ENCODE measurements at regions of chr4 and their contacts with region 1.

Region 1: DNA sequence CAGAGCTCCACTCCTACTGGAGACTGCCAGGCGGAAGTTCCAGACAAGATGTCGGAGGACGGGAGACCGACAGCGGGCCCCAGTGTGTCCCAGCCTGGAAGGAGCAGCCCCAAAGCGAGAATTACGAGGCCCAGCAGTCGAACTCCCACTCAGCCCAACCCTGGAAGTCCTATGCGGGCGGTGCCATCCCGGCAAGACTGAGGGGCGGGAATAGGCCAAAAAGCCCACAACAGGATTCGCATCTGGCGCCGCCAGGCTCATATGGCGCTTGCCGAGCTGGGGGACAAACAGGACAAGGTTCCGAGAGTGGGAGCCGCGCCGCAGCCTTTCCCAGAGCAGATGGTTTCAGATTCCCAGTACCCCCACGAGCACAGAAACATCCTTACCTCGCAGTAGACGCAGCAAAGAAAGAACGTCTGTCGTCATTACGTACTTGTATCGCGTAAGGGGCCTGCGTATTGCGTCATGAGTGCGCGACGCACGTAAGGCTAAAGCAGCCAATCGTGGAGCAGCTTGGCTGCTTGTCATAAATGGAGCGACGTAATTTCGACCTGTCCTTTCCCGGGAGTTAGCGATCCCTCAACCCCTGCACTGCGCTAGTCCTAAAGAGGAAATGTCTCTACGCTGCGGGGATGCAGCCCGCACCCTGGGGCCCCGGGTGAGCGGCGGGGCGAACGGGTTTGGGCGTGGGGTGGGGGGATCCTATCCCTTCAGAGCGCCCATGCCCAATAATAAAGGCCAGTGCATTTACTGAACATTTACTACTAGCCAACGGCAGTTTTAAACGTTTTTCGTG is at the starts of genes LIAS and RPL9:
- DNase-seq: peak; percentile 83 to 99 (median 94)
- ATAC-seq: peak; percentile 81
- H3K4me3 ChIP-seq: peak within 1 kb of the TSS; percentile 87 to 90
- H3K4me3 Mint-ChIP-seq: peak within 1 kb of the TSS; percentile 98
- H3K27ac ChIP-seq: peak within 1 kb of the TSS; percentile 91 to 97
- H3K27ac Mint-ChIP-seq: peak within 1 kb of the TSS; percentile 100
- H3K4me1 ChIP-seq: peaks cover 25% of the 10 kb centered on the region
- H3K4me1 Mint-ChIP-seq: peaks cover 42% of the 10 kb centered on the region
- H3K27me3 ChIP-seq: no peaks in the 10 kb centered on the region
- H3K27me3 Mint-ChIP-seq: no peaks in the 10 kb centered on the region
- CTCF ChIP-seq: no peak
- total RNA-seq, gene LIAS: 9.5 to 11.0 TPM
- total RNA-seq, gene RPL9: 2,977 to 3,433 TPM

Region 2: DNA sequence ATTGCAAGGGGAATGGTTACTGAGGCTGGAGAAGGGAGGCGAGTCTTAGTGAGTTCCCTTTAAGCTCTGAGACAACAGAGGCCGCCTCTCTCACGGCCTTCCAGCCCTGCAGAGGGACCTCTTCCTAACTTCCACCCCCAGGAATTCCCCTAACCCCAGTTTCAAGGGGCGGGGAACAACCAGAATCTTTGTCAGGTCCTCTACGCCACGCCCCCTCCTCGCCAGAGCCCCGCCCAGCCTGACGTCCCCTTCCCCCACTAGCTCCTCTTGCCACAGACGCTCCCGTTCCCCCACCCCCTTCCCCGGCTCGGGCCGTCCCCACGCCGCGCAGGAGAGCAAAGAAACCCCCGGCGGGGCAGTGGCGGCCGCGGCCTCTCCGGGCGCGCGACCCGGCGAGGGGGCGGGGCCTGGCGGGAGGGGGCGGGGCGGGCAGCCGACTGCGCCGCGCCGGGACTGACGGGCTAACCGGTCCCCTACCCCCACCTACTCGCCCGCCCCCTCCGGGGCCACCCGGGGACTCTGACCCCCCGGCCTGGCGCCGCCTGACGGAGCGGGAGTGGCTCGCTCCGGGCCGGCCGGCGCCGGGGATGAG is 414.2 kb before region 1 on chr4:
- CTCF ChIA-PET with region 1: no interaction called
- POLR2A ChIA-PET with region 1: no interaction called
- intact Hi-C with region 1: loop called (anchors 5 to 10 kb)
- DNase-seq: peak; percentile 85 to 99 (median 93)
- ATAC-seq: peak; percentile 83
- H3K4me3 ChIP-seq: peak overlapping the region; percentile 60 to 66
- H3K4me3 Mint-ChIP-seq: peak overlapping the region; percentile 92
- H3K27ac ChIP-seq: peak overlapping the region; percentile 59 to 89
- H3K27ac Mint-ChIP-seq: peak overlapping the region; percentile 96
- H3K4me1 ChIP-seq: peaks cover 21% of the 10 kb centered on the region
- H3K4me1 Mint-ChIP-seq: peaks cover 53% of the 10 kb centered on the region
- H3K27me3 ChIP-seq: no peaks in the 10 kb centered on the region
- H3K27me3 Mint-ChIP-seq: no peaks in the 10 kb centered on the region
- CTCF ChIP-seq: no peak

Region 3: DNA sequence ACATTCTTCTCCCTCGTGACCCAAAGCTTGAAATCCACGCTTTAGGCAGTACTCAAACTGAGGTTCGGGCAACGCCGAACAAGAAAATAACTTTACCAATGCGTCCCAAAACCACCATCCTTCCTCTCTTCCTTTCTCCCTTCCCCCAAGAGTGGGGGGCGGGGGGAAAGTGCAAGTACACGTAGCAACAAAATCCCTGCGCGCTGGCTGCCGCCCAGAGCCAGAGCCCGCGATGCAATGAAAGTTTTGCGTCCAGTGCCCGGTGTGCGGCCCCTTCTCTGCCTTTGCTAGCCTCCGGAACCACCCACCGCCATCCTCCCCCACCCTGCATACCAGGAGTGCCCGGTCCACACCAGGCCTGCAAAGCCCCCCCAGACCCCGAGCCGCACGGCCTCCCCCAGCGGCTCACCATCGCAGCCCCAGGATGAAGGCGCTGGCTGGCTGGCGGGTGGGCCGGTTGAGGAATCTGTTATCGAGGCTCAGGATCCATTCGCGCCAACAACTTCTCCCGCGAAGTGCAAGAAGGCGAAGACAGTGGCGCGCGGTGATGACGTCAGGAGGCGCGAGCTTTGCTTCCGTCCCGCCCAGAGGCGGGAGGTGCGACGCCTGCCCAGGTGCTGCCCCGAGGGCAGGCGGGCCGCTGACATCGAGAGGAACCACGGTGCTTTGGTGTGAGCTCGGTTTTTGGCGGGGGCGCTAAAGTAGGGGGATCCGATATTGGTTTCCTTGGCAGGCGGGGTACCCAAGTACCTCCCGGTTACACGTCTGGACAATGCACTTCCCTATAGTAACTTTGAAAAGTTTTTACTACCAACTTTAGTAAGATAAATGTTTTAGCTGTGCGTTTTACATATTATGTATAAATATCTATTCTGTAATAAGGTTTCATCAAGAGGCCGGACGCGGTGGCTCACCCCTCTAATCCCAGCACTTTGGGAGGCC is 92.6 kb before region 1 on chr4 and contains the start of gene RFC1:
- CTCF ChIA-PET with region 1: no interaction called
- POLR2A ChIA-PET with region 1: interaction called, 5 read pairs
- intact Hi-C with region 1: loop called (anchors 1 kb)
- DNase-seq: peak; percentile 86 to 96 (median 95)
- ATAC-seq: peak; percentile 97
- H3K4me3 ChIP-seq: peak within 1 kb of the TSS; percentile 92 to 99
- H3K4me3 Mint-ChIP-seq: peak within 1 kb of the TSS; percentile 93
- H3K27ac ChIP-seq: peak within 1 kb of the TSS; percentile 81
- H3K27ac Mint-ChIP-seq: peak within 1 kb of the TSS; percentile 94
- H3K4me1 ChIP-seq: peaks cover 18% of the 10 kb centered on the region
- H3K4me1 Mint-ChIP-seq: peaks cover 35% of the 10 kb centered on the region
- H3K27me3 ChIP-seq: no peaks in the 10 kb centered on the region
- H3K27me3 Mint-ChIP-seq: no peaks in the 10 kb centered on the region
- CTCF ChIP-seq: no peak
- total RNA-seq, gene RFC1: 82.2 to 89.8 TPM

Region 4: DNA sequence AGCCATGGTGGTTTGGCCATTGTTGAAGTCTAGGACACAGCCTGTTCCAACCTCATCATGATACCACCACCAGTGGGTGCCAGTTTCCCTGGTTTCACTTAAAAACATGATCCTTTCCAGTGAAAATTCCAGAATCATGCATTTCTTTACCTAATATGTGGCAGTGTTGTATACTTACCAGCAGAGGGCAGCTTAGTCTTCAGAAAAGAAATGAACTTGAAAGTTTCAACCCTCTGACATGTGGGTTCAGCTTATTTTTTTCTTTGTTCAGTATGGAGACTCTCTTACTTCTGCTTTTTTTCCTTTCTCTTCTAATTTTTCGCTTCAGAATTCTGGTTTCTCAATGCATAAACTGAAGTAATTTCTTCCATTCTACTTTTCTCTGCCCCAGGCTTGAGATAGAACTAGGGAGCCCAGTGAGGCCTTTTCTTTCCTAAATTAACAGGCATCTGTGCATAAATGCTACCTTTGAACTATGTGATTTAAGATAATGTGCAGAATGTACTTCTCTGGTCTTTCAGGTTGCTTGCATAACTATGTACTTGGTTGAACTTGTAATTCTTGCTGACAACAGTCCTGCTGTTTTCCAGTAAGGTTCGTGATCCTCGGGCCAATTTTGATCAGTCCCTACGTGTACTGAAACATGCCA is 10.8 kb after region 1 on chr4:
- CTCF ChIA-PET with region 1: interaction called, 5 read pairs
- POLR2A ChIA-PET with region 1: interaction called, 10 read pairs
- intact Hi-C with region 1: no loop called
- DNase-seq: peak in 2 of 9 experiments; percentile 55 to 72
- ATAC-seq: peak; percentile 93
- H3K4me3 ChIP-seq: no peak overlapping the region
- H3K4me3 Mint-ChIP-seq: no peak overlapping the region
- H3K27ac ChIP-seq: no peak overlapping the region
- H3K27ac Mint-ChIP-seq: no peak overlapping the region
- H3K4me1 ChIP-seq: no peaks in the 10 kb centered on the region
- H3K4me1 Mint-ChIP-seq: peaks cover 4% of the 10 kb centered on the region
- H3K27me3 ChIP-seq: no peaks in the 10 kb centered on the region
- H3K27me3 Mint-ChIP-seq: no peaks in the 10 kb centered on the region
- CTCF ChIP-seq: peak; percentile 82

Region 5: DNA sequence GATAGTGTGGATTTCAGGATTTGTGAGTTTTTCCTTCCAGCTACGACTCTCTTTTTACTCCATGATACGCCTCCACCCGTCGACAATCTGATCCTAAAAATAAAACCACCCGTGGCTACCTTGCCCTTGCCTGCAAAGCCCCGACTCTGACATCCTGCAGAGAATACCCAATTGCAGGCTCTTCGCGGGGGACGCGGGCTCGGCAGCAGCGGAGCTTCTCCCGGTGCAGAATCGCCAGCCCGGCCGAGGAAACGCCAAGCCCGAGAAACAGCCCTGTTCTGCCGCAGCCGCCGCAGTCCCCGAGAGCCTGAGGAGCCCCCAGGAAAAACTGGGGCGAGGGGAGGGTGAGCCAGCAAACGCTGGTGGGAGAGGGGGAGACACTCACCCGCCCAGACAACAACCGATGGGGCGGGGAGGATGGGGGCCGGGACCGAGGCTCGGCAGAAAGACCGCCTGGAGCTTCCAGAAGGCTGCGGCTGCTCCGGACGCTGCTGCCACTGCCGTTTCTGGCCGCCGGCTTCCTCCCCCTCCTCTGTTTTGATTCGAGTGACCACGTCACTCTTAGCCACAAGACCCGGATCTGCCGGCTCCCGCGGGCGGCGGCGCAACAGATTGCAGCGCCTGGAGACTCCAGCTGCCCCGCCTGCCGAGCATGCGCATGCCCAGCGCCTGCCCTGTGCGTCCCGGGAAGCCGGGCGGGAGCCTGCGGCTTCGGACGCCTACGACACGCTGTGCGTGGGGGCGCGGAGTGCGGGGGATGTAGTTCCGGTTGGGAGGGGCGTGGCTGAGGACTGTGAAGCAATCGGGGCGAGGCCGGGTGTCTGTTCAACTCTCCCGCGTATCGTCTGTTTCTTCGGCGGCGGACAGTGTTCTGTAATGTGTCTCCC is 179.9 kb after region 1 on chr4 and contains the start of gene SMIM14:
- CTCF ChIA-PET with region 1: no interaction called
- POLR2A ChIA-PET with region 1: interaction called, 5 read pairs
- intact Hi-C with region 1: loop called (anchors 1 to 2 kb)
- DNase-seq: peak; percentile 72 to 95 (median 90)
- ATAC-seq: peak; percentile 83
- H3K4me3 ChIP-seq: peak within 1 kb of the TSS; percentile 62 to 97
- H3K4me3 Mint-ChIP-seq: peak within 1 kb of the TSS; percentile 90
- H3K27ac ChIP-seq: peak within 1 kb of the TSS; percentile 63 to 91
- H3K27ac Mint-ChIP-seq: peak within 1 kb of the TSS; percentile 96
- H3K4me1 ChIP-seq: peaks cover 18% of the 10 kb centered on the region
- H3K4me1 Mint-ChIP-seq: peaks cover 44% of the 10 kb centered on the region
- H3K27me3 ChIP-seq: no peaks in the 10 kb centered on the region
- H3K27me3 Mint-ChIP-seq: no peaks in the 10 kb centered on the region
- CTCF ChIP-seq: no peak
- total RNA-seq, gene SMIM14: 1.4 TPM

Measured in CD8-positive, alpha-beta T cell (primary cell).